PC-9 (cell line): ENCODE measurements at regions of chr10 and their contacts with region 1.

Region 1: DNA sequence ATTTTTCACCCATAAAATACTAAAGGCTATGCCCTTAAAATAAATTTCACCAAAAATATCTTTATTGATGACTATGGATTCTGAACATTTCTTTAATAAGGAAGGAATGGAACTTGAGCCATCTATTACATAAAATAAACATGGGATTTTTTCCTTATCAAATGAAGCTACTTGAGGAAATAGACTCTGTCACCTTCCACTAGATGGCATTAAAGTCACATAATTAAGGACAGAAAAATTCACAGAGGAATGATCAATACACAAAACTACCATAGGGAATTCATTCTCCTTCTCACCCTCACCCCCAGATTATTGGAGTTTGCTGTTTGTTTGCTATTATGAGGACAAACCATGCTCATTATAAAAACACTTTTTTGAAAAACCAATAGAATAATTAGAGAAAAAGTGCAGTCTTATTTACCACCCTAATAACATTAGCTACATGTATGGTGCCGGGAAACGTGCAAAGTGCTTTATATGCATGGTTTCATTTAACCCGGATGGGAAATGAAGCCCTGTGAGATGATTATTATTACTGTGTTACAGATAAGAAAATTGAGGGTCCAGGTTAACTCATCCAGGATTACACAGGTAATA is 21.1 kb upstream of the FOXI2 start:
- DNase-seq: peak in 1 of 2 experiments; percentile 41
- H3K4me3 ChIP-seq: no peak overlapping the region
- H3K27ac ChIP-seq: no peak overlapping the region
- H3K4me1 ChIP-seq: no peaks in the 10 kb centered on the region
- H3K27me3 ChIP-seq: 0 out of 2 replicates have a peak, but pooled peaks cover 8% of the 10 kb centered on the region
- CTCF ChIP-seq: peak; percentile 59; the same call in 1 of the 2 replicates

Region 2: GRCh38 chr10:126955934-126956711 is 759.8 kb before region 1 on chr10:
- CTCF ChIA-PET with region 1: no interaction called
- POLR2A ChIA-PET with region 1: no interaction called
- intact Hi-C with region 1: no loop called
- DNase-seq: no peak
- H3K4me3 ChIP-seq: no peak overlapping the region
- H3K27ac ChIP-seq: no peak overlapping the region
- H3K4me1 ChIP-seq: no peaks in the 10 kb centered on the region
- H3K27me3 ChIP-seq: no peaks in the 10 kb centered on the region
- CTCF ChIP-seq: no peak

Region 3: GRCh38 chr10:127254276-127254675 is 461.6 kb before region 1 on chr10:
- CTCF ChIA-PET with region 1: no interaction called
- POLR2A ChIA-PET with region 1: no interaction called
- intact Hi-C with region 1: no loop called
- DNase-seq: no peak
- H3K4me3 ChIP-seq: no peak overlapping the region
- H3K27ac ChIP-seq: no peak overlapping the region
- H3K4me1 ChIP-seq: no peaks in the 10 kb centered on the region
- H3K27me3 ChIP-seq: no peaks in the 10 kb centered on the region
- CTCF ChIP-seq: no peak

Region 4: DNA sequence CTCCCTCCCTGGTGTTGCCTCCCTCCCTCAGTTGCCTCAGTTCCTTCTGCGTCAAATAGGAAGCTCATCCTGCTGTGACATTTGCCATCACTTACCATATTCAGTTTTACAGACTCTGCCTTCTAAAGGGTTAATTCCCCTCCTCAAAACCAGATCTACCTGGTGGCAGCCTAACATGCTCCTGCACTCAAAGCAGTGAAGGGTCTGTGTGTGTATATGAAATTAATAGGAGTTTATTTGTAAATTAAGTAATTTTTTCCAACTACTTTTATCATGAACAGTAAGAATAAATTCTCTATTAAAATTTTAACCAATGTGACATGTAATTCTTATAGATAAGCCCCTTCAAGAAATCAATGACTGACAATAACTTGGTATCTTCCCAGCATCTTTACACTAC is 360.9 kb before region 1 on chr10:
- CTCF ChIA-PET with region 1: no interaction called
- POLR2A ChIA-PET with region 1: no interaction called
- intact Hi-C with region 1: no loop called
- DNase-seq: no peak
- H3K4me3 ChIP-seq: no peak overlapping the region
- H3K27ac ChIP-seq: no peak overlapping the region
- H3K4me1 ChIP-seq: no peaks in the 10 kb centered on the region
- H3K27me3 ChIP-seq: no peaks in the 10 kb centered on the region
- CTCF ChIP-seq: peak; percentile 53; the same call in 1 of the 2 replicates

Region 5: GRCh38 chr10:127853868-127854768 is 138.2 kb after region 1 on chr10:
- CTCF ChIA-PET with region 1: no interaction called
- POLR2A ChIA-PET with region 1: no interaction called
- intact Hi-C with region 1: loop called (anchors 5 kb)
- DNase-seq: peak in 1 of 2 experiments; percentile 26
- H3K4me3 ChIP-seq: no peak overlapping the region
- H3K27ac ChIP-seq: no peak overlapping the region
- H3K4me1 ChIP-seq: no peaks in the 10 kb centered on the region
- H3K27me3 ChIP-seq: peaks cover 16% of the 10 kb centered on the region; the same call in 1 of the 2 replicates
- CTCF ChIP-seq: peak; percentile 71

Region 6: DNA sequence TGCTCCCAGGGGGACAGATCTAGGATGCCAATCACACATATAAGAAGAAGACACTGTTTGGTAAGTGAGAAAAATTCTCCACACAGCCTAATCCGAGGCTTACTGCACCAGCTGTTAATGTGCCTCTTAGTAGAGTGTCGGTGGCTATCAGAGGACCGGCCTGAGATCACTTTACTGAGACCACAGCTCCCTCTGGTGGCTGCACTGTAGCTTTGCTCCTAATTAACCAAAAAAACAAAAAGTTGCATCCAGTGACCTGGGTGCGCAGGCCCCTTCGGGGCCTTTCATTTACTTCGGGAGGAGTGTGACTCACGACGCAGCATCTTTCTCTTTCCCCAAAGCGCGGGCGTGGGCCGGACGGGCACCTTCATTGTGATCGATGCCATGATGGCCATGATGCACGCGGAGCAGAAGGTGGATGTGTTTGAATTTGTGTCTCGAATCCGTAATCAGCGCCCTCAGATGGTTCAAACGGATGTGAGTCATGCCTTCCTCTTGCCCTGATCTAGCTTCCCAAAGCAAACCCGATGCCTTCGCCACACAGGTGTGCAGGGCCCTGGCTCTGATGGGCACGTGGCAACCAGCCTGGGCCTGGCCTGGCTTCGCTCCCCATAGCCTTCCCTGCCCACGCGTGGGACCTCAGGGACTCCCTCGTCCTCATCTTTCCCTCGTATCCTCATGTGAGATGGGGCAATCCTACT is 353.6 kb after region 1 on chr10:
- CTCF ChIA-PET with region 1: no interaction called
- POLR2A ChIA-PET with region 1: no interaction called
- intact Hi-C with region 1: loop called (anchors 2 kb)
- DNase-seq: peak; percentile 42 to 48
- H3K4me3 ChIP-seq: no peak overlapping the region
- H3K27ac ChIP-seq: no peak overlapping the region
- H3K4me1 ChIP-seq: peaks cover 12% of the 10 kb centered on the region
- H3K27me3 ChIP-seq: no peaks in the 10 kb centered on the region
- CTCF ChIP-seq: peak; percentile 80

Region 7: DNA sequence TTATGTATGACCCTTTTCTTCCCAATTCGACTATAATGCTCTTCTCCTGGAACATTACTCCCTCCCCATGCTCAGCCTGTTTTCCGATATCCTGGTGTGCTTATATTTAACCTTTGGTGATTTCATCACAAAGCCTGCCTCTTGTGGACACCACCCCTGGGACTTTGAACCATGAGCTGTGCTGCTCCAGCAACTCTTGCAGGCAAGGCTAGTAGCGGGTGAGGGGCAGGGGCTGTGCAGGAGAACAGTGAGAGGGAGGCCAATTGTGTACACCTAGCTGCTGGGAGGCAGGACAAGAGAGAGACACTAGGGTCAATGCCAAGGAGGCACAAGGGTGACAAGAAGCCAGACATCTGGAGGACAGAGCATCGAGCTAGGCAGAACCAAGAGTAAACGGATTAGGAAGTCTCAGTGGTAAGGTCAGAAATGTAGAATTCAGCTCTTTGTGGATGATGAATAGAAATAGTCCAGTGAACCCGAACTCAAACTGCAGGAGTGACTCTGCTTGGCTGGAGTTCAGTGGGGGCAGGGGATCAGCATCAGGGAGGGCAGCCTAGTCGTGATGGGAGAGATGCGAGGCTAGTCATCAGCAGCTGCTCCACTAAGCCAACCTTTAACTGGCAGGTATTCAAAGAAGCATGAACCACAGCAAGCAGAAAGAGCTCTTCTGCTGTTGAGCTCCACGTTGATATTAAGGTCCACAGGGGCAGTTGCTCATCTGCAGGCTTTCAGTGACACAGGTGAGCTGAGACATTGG is 441.3 kb after region 1 on chr10:
- CTCF ChIA-PET with region 1: no interaction called
- POLR2A ChIA-PET with region 1: no interaction called
- intact Hi-C with region 1: loop called (anchors 5 kb)
- DNase-seq: no peak
- H3K4me3 ChIP-seq: no peak overlapping the region
- H3K27ac ChIP-seq: no peak overlapping the region
- H3K4me1 ChIP-seq: no peaks in the 10 kb centered on the region
- H3K27me3 ChIP-seq: peaks cover 55% of the 10 kb centered on the region
- CTCF ChIP-seq: no peak